Posterior vena cava (tissue), 2 donors: ENCODE measurements at regions of chr19 and their contacts with region 1.

Region 1: GRCh38 chr19:1979670-1980069 is 35.8 kb downstream of the BTBD2 start:
- DNase-seq: no peak

Region 2: GRCh38 chr19:1825909-1826556 is 153.6 kb before region 1 on chr19:
- intact Hi-C with region 1: loop called in 1 of 2 experiments (anchors 2 kb)
- DNase-seq: peak; percentile 93